CD8-positive, alpha-beta T cell (primary cell): ENCODE measurements at regions of chr2 and their contacts with region 1.

Region 1: DNA sequence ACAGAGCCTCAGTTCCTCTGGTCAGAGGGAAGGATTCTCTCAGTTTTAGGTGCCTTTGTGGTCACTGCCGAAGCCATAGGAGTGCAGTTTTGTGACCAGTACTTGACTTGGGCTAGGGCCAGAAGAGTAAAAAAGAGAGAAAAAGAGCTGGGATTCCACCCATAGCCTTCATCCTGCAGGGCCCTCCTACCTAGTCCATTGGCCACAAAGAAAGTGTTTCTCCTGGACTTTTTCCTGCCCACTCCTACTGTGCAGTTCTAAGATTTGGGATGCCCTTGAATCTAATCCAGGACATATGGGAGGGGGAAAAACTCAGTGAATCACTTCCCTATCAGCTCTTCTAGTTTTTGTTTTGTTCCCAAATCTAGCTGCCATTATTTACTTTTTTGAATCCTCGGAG is 26.0 kb downstream of the FAM117B start:
- DNase-seq: no peak
- ATAC-seq: no peak
- H3K4me3 ChIP-seq: no peak overlapping the region
- H3K4me3 Mint-ChIP-seq: no peak overlapping the region
- H3K27ac ChIP-seq: no peak overlapping the region
- H3K27ac Mint-ChIP-seq: peak overlapping the region; percentile 72
- H3K4me1 ChIP-seq: peaks cover 65% of the 10 kb centered on the region
- H3K4me1 Mint-ChIP-seq: peaks cover 78% of the 10 kb centered on the region
- H3K27me3 ChIP-seq: no peaks in the 10 kb centered on the region
- H3K27me3 Mint-ChIP-seq: no peaks in the 10 kb centered on the region
- CTCF ChIP-seq: no peak

Region 2: GRCh38 chr2:202671317-202672035 is 10.7 kb after region 1 on chr2:
- CTCF ChIA-PET with region 1: no interaction called
- POLR2A ChIA-PET with region 1: interaction called, 3 read pairs
- intact Hi-C with region 1: loop called in 1 of 2 experiments (anchors 2 kb)
- DNase-seq: no peak
- ATAC-seq: no peak
- H3K4me3 ChIP-seq: no peak overlapping the region
- H3K4me3 Mint-ChIP-seq: no peak overlapping the region
- H3K27ac ChIP-seq: no peak overlapping the region
- H3K27ac Mint-ChIP-seq: no peak overlapping the region
- H3K4me1 ChIP-seq: peaks cover 77% of the 10 kb centered on the region
- H3K4me1 Mint-ChIP-seq: peaks cover 74% of the 10 kb centered on the region
- H3K27me3 ChIP-seq: no peaks in the 10 kb centered on the region
- H3K27me3 Mint-ChIP-seq: no peaks in the 10 kb centered on the region
- CTCF ChIP-seq: no peak